Mammary epithelial cell (primary cell): ENCODE measurements at regions of chr5 and their contacts with region 1.

Region 1: DNA sequence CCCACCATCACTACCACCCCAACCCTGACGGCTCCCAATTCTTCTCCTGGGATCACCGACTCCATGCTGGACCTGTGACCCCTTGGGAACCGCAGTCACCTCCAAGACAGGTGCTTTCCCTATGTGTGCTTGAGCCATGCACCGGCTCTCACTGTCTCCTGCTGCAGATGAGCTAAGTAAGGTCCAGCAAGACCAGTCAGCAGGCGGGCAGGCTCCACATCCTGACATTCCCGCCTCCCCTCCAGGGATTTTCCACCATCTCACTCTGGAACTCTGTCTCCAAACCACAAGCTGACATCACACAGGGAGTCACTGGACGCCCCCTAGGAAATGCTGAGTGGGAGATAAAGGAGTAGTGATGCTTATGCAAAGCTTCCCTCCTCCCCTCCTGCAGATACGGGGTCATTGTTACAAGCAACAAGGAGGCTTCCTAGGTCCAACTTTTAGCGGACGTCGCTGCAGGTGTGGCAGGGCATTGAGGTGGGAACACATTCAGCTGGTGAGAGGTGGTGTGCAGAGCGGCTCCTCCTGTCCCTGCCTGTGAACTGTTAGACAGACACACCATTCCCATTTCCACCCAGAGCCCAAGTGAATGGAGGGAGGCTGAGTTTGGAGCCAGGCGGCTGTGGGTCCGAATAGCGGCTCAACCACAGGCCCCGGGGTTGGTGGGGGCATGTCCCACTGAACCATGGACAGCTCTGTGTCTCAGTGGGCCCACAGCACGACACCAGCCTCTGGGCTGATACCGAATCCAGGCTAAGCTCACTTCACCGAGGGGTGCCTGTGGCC is 129.2 kb upstream of the PHYKPL start:
- DNase-seq: no peak
- H3K4me3 ChIP-seq: no peak overlapping the region
- H3K27ac ChIP-seq: no peak overlapping the region
- H3K4me1 ChIP-seq: no peaks in the 10 kb centered on the region
- H3K27me3 ChIP-seq: no peaks in the 10 kb centered on the region
- CTCF ChIP-seq: no peak

Region 2: DNA sequence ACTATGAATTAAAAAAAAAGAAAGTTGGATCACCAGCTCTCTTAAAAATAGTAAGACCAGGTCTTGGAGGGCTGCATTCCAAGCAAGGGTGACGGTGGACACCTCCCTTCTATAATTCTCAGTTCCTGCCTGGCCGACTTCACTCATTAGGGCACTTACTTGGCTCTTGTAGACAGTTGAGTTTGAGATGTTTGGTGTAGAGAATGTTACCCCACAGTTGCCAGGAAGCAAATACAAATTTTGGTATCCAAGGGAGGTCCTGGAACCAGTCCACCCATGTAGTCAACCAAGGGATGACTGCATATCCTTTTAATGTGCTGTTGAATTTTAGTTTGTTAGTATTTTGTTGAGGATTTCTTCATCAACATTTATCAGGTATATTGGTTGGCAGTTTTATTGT is 741.3 kb before region 1 on chr5:
- CTCF ChIA-PET with region 1: no interaction called
- dilution Hi-C with region 1: no loop called
- in situ Hi-C with region 1: no loop called
- intact Hi-C with region 1: no loop called
- DNase-seq: no peak
- H3K4me3 ChIP-seq: no peak overlapping the region
- H3K27ac ChIP-seq: no peak overlapping the region
- H3K4me1 ChIP-seq: no peaks in the 10 kb centered on the region
- H3K27me3 ChIP-seq: no peaks in the 10 kb centered on the region
- CTCF ChIP-seq: no peak

Region 3: GRCh38 chr5:178404987-178405386 is 43.1 kb after region 1 on chr5:
- CTCF ChIA-PET with region 1: no interaction called
- dilution Hi-C with region 1: loop called (anchors 5 kb)
- in situ Hi-C with region 1: no loop called
- intact Hi-C with region 1: no loop called
- DNase-seq: peak; percentile 7
- H3K4me3 ChIP-seq: no peak overlapping the region
- H3K27ac ChIP-seq: no peak overlapping the region
- H3K4me1 ChIP-seq: no peaks in the 10 kb centered on the region
- H3K27me3 ChIP-seq: no peaks in the 10 kb centered on the region
- CTCF ChIP-seq: no peak